Activated T-helper 1 cell treated with anti-CD3 and anti-CD28 coated beads, Interleukin-12 subunit alpha, Interleukin-12 subunit beta, Interleukin-2, Interleukin-4 antibody, amounts not matched to agents 30 ng/mL and 10 ng/mL and 1 ng/mL, durations not matched to agents 14 hours and 24 hours and 36 hours (primary cell): ENCODE measurements at regions of chr2 and their contacts with region 1.

Region 1: DNA sequence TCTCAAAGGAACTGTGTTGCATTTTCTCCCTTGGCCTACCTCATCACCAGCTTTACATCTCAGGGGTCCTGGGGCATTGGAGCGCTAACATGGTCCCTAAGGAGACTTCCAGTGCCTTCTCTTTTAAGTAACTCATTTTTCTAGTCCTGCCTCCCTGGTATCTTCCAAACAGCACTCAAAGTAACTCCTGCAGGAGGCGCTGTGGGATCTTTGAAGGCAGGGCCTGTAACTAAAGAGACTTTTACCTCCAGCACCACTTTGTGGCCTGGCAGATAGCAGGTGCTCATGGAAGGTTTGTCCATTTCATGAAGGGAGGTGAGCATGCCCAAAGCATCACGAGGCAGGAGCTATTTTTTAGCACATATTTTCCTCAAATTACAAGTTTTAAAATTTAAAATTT is 411.0 kb upstream of the GYPC start:
- DNase-seq: no peak
- H3K4me3 Mint-ChIP-seq: no peak overlapping the region
- H3K27ac Mint-ChIP-seq: no peak overlapping the region
- H3K4me1 Mint-ChIP-seq: no peaks in the 10 kb centered on the region
- H3K27me3 Mint-ChIP-seq: no peaks in the 10 kb centered on the region

Region 2: DNA sequence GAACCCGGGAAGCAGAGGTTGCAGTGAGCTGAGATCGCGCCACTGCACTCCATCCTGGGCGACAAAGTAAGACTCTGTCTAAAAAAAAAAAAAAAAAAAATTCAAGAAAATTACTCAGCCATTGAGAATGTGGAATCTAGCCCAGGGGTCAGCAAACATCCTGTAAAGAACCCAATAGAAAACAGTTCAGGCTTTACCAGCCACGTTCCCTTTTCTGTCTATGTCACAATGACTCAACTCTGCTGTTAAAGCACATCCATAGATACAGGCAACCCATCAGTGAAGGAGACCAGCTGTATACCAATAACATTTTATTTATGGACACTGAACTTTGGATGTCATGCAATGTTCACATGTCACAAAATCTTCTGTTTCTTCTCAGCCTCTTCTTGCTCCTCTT is 24.6 kb before region 1 on chr2:
- intact Hi-C with region 1: no loop called
- DNase-seq: no peak
- H3K4me3 Mint-ChIP-seq: no peak overlapping the region
- H3K27ac Mint-ChIP-seq: no peak overlapping the region
- H3K4me1 Mint-ChIP-seq: no peaks in the 10 kb centered on the region
- H3K27me3 Mint-ChIP-seq: no peaks in the 10 kb centered on the region

Region 3: DNA sequence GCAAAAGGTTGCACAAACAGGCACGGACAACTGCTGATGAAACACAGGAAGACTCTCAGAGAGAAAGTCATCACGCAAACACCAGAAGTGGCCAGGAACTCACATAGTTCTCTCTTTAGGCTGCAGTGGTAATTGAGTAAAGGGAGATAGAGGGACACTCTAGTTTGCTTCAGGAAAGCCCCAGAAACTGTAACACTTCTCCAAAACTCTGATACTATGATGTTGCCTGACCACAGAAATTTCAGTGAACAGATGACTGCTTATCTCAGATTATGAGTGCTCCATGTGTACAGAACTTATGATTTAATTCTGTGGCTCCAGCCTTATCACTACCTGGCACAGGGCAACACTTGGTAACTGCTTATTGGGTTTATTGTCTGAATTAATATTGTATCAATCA is 99.6 kb after region 1 on chr2:
- intact Hi-C with region 1: no loop called
- DNase-seq: no peak
- H3K4me3 Mint-ChIP-seq: no peak overlapping the region
- H3K27ac Mint-ChIP-seq: no peak overlapping the region
- H3K4me1 Mint-ChIP-seq: no peaks in the 10 kb centered on the region
- H3K27me3 Mint-ChIP-seq: no peaks in the 10 kb centered on the region

Region 4: GRCh38 chr2:126634273-126634861 is 389.4 kb after region 1 on chr2:
- intact Hi-C with region 1: loop called (anchors 10 kb)
- DNase-seq: no peak
- H3K4me3 Mint-ChIP-seq: no peak overlapping the region
- H3K27ac Mint-ChIP-seq: no peak overlapping the region
- H3K4me1 Mint-ChIP-seq: no peaks in the 10 kb centered on the region
- H3K27me3 Mint-ChIP-seq: peaks cover 29% of the 10 kb centered on the region